ENCODE measurements at regions of chr19 and their contacts with region 1.

Region 1: DNA sequence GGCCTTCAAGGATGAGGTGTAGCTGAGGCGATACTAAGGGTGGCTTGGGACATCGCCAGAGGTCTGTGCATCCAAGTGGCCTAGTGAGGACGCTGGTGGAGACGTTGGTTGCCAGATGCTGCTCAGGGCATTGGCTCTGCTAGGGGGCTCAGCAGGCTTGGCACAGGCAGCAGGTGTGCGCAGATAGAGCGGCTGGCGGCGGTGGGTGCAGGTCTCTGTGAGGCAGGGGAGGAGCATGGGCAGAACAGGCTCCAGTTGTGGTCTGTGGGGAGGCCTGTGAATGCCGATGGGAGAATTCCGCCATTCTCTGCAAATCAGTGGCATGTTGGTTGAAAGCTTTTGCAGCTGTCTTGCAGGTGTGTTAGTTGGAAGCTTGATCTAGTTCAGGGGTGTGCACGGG is 21.2 kb downstream of the PRAM1 start:
- DNase-seq: no peak
- ATAC-seq: peak; percentile 25
- H3K4me3 Mint-ChIP-seq: no peak overlapping the region
- H3K27ac Mint-ChIP-seq: peak overlapping the region; percentile 72
- H3K4me1 Mint-ChIP-seq: peaks cover 68% of the 10 kb centered on the region
- H3K27me3 Mint-ChIP-seq: no peaks in the 10 kb centered on the region
- CTCF ChIP-seq: no peak

Region 2: GRCh38 chr19:8444645-8445487 is 36.3 kb before region 1 on chr19 and contains the start of gene HNRNPM:
- CTCF ChIA-PET with region 1: interaction called, 3 read pairs
- POLR2A ChIA-PET with region 1: interaction called, 13 read pairs
- intact Hi-C with region 1: no loop called
- DNase-seq: peak; percentile 100
- ATAC-seq: peak; percentile 96
- H3K4me3 Mint-ChIP-seq: peak within 1 kb of the TSS; percentile 95
- H3K27ac Mint-ChIP-seq: peak within 1 kb of the TSS; percentile 90
- H3K4me1 Mint-ChIP-seq: peaks cover 34% of the 10 kb centered on the region
- H3K27me3 Mint-ChIP-seq: no peaks in the 10 kb centered on the region
- CTCF ChIP-seq: no peak
- total RNA-seq, gene HNRNPM: 242 to 254 TPM

Measured in activated CD8-positive, alpha-beta T cell treated with anti-CD3 and anti-CD28 coated beads for 36 hours (primary cell).